Endothelial cell of umbilical vein (primary cell): ENCODE measurements at regions of chr9 and their contacts with region 1.

Region 1: GRCh38 chr9:137055385-137056364 is 1.8 kb upstream of the ENTPD2 start:
- DNase-seq: no peak
- H3K4me3 ChIP-seq: no peak overlapping the region
- H3K27ac ChIP-seq: no peak overlapping the region
- H3K4me1 ChIP-seq: no peaks in the 10 kb centered on the region
- H3K27me3 ChIP-seq: peaks cover 8 to 17% of the 10 kb centered on the region in 2 experiments
- CTCF ChIP-seq: no peak
- POLR2A ChIP-seq: no peak

Region 2: GRCh38 chr9:137070201-137070905 is 14.7 kb after region 1 on chr9 and contains the start of gene SAPCD2:
- CTCF ChIA-PET with region 1: interaction called, 14 read pairs
- POLR2A ChIA-PET with region 1: no interaction called
- dilution Hi-C with region 1: no loop called
- intact Hi-C with region 1: no loop called
- DNase-seq: peak; percentile 84
- H3K4me3 ChIP-seq: peak within 1 kb of the TSS; percentile 37 to 49 (median 39)
- H3K27ac ChIP-seq: no peak within 1 kb of the TSS
- H3K4me1 ChIP-seq: peaks cover 11% of the 10 kb centered on the region
- H3K27me3 ChIP-seq: no peaks in the 10 kb centered on the region
- CTCF ChIP-seq: no peak
- POLR2A ChIP-seq: peak; percentile 75
- total RNA-seq, gene SAPCD2: 24.3 and 27.8 TPM in 2 replicates